Activated naive CD8-positive, alpha-beta T cell treated with anti-CD3 and anti-CD28 coated beads, Interleukin-2, amount 10 ng/mL, durations not matched to agents 7 days and 5 days (primary cell): ENCODE measurements at regions of chr9 and their contacts with region 1.

Region 1: GRCh38 chr9:110148384-110148783 is 59.6 kb downstream of the C9orf152 start:
- DNase-seq: peak; percentile 63
- ATAC-seq: peak; percentile 86
- H3K4me3 Mint-ChIP-seq: peak overlapping the region; percentile 90
- H3K27ac Mint-ChIP-seq: peak overlapping the region; percentile 97
- H3K4me1 Mint-ChIP-seq: peaks cover 72% of the 10 kb centered on the region
- H3K27me3 Mint-ChIP-seq: peaks cover 4% of the 10 kb centered on the region

Region 2: GRCh38 chr9:110029429-110029955 is 118.9 kb before region 1 on chr9:
- POLR2A ChIA-PET with region 1: no interaction called
- DNase-seq: no peak
- ATAC-seq: no peak
- H3K4me3 Mint-ChIP-seq: no peak overlapping the region
- H3K27ac Mint-ChIP-seq: no peak overlapping the region
- H3K4me1 Mint-ChIP-seq: peaks cover 11% of the 10 kb centered on the region
- H3K27me3 Mint-ChIP-seq: peaks cover 13% of the 10 kb centered on the region

Region 3: GRCh38 chr9:110125207-110125751 is 23.1 kb before region 1 on chr9:
- POLR2A ChIA-PET with region 1: interaction called, 12 read pairs
- DNase-seq: no peak
- ATAC-seq: no peak
- H3K4me3 Mint-ChIP-seq: no peak overlapping the region
- H3K27ac Mint-ChIP-seq: no peak overlapping the region
- H3K4me1 Mint-ChIP-seq: peaks cover 16% of the 10 kb centered on the region
- H3K27me3 Mint-ChIP-seq: no peaks in the 10 kb centered on the region

Region 4: GRCh38 chr9:110170357-110171257 is 22.2 kb after region 1 on chr9:
- POLR2A ChIA-PET with region 1: no interaction called
- DNase-seq: no peak
- ATAC-seq: no peak
- H3K4me3 Mint-ChIP-seq: no peak overlapping the region
- H3K27ac Mint-ChIP-seq: no peak overlapping the region
- H3K4me1 Mint-ChIP-seq: peaks cover 7% of the 10 kb centered on the region
- H3K27me3 Mint-ChIP-seq: no peaks in the 10 kb centered on the region

Region 5: GRCh38 chr9:110197330-110198187 is 49.2 kb after region 1 on chr9:
- POLR2A ChIA-PET with region 1: no interaction called
- DNase-seq: no peak
- ATAC-seq: no peak
- H3K4me3 Mint-ChIP-seq: no peak overlapping the region
- H3K27ac Mint-ChIP-seq: no peak overlapping the region
- H3K4me1 Mint-ChIP-seq: no peaks in the 10 kb centered on the region
- H3K27me3 Mint-ChIP-seq: peaks cover 5% of the 10 kb centered on the region